Endothelial cell of umbilical vein (primary cell): ENCODE measurements at regions of chr2 and their contacts with region 1.

Region 1: DNA sequence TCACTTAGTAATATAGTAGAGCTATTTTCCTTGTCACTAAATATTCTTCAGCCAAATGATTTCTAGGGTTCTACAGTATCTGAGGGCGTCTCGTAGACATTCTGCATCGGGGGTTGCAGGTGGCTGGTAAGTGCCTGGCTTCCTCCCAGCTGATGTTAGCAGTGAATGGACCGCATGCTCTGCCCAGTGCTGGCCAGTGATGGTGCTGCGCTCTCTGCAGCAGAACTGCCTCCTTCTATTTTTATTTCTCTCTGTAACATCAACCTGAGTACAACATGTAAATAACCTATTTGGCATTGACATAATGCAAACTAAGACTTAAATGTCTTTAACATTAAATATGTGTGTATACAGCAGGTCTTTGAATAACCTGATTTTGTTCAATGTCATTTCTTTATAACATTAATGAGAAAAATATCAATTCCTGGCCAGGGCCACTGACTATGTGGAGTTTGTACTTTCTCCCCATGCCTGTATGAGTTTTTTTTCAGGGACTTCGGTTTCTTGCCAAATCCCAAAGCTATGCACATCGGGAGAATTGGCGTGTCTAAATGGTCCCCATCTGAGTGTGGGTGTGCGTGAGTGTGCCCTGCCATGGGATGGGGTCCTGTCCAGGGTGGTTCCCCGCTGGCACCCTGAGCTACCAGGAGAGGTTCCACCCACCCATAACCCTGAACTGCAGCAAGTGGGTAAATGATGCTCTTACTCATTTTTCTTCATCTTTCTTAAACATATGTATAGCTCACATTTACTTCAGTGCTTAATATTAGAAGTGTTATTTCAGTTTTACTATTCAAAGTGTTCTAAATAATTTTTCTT is 278.2 kb upstream of the EPAS1 start:
- DNase-seq: no peak
- H3K4me3 ChIP-seq: no peak overlapping the region
- H3K27ac ChIP-seq: no peak overlapping the region
- H3K4me1 ChIP-seq: peaks cover 22% of the 10 kb centered on the region
- H3K27me3 ChIP-seq: no peaks in the 10 kb centered on the region
- CTCF ChIP-seq: no peak
- POLR2A ChIP-seq: no peak

Region 2: DNA sequence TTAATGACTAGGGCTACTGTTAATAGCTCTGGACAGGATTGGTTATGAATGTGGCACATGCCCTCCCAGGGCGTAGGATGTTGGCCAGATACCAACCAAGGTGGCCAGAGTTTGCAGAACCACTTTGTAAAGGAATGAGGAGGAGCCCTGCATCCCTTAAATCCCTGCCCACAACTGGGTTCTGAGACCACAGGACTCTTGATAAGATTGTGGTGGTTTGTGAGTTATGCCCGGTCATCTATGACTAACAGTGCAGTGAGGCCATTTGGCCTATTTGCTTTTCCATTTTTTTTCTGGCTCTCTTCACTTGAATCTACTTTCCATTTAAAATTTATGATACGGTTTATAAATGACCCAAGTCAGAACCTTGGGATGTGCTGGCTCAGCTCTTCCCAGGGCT is 73.0 kb before region 1 on chr2:
- CTCF ChIA-PET with region 1: no interaction called
- POLR2A ChIA-PET with region 1: no interaction called
- dilution Hi-C with region 1: no loop called
- intact Hi-C with region 1: no loop called
- DNase-seq: no peak
- H3K4me3 ChIP-seq: no peak overlapping the region
- H3K27ac ChIP-seq: no peak overlapping the region
- H3K4me1 ChIP-seq: peaks cover 39% of the 10 kb centered on the region
- H3K27me3 ChIP-seq: no peaks in the 10 kb centered on the region
- CTCF ChIP-seq: no peak
- POLR2A ChIP-seq: no peak

Region 3: DNA sequence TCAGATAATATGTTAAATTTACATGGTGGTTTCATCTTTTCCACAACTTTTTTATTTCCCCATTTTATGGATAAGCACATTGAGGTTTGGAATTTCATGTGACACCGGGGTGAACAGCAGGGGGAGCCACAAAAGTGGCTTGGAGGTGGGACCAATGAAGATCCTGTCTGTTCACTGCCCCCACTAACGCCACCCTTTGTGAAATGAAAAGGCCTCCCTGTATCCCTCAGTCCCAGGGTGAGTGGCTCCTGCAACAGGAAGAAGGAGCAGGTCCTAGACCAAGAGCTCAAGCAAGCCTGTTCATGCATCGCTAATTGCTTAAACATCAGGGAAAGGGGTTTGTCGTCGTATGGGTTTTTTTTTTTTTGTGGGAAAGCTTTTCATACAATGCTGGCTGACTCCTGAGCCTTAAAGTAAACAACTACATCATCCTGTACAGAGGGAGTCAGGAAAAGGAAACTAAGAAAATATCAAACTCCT is 10.4 kb after region 1 on chr2:
- CTCF ChIA-PET with region 1: interaction called, 10 read pairs
- POLR2A ChIA-PET with region 1: no interaction called
- dilution Hi-C with region 1: no loop called
- intact Hi-C with region 1: loop called (anchors 1 kb)
- DNase-seq: peak; percentile 96
- H3K4me3 ChIP-seq: no peak overlapping the region
- H3K27ac ChIP-seq: peak overlapping the region; percentile 77
- H3K4me1 ChIP-seq: peaks cover 20% of the 10 kb centered on the region
- H3K27me3 ChIP-seq: no peaks in the 10 kb centered on the region
- CTCF ChIP-seq: peak; percentile 32 to 47
- POLR2A ChIP-seq: no peak